ENCODE measurements at regions of chr22 and their contacts with region 1.

Region 1: DNA sequence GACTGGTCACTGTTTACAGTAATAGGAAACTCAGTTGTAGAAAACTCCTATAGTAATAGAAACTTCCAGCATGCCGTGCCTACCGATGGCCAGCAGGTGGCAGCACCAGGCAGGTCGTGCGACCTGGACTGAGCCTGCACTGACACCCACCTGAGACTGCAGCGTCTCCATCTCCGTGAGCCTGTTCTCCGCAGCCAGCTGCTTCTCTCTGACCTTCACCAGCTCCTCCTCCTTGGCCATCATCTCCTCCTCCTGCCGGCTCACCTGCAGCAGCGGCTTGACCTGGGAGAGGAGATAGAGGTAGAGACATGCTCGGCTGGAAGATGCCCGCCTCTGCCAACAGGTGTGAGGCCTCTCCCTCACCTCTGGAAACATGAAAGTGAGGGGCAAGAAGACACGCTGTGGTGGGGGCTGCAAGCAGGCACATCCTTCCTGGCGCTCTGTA is 48.5 kb downstream of the APOL1 start:
- DNase-seq: peak; percentile 82
- H3K4me3 Mint-ChIP-seq: no peak overlapping the region
- H3K27ac Mint-ChIP-seq: no peak overlapping the region
- H3K4me1 Mint-ChIP-seq: peaks cover 8% of the 10 kb centered on the region
- H3K27me3 Mint-ChIP-seq: no peaks in the 10 kb centered on the region
- CTCF ChIP-seq: peak; percentile 90

Region 2: GRCh38 chr22:36180038-36180880 is 121.1 kb before region 1 on chr22:
- CTCF ChIA-PET with region 1: no interaction called
- intact Hi-C with region 1: no loop called
- DNase-seq: peak; percentile 87
- H3K4me3 Mint-ChIP-seq: no peak overlapping the region
- H3K27ac Mint-ChIP-seq: no peak overlapping the region
- H3K4me1 Mint-ChIP-seq: no peaks in the 10 kb centered on the region
- H3K27me3 Mint-ChIP-seq: peaks cover 42% of the 10 kb centered on the region
- CTCF ChIP-seq: peak; percentile 92

Region 3: GRCh38 chr22:36352803-36353507 is 51.5 kb after region 1 on chr22:
- CTCF ChIA-PET with region 1: no interaction called
- intact Hi-C with region 1: loop called (anchors 2 kb)
- DNase-seq: peak; percentile 80
- H3K4me3 Mint-ChIP-seq: peak overlapping the region; percentile 54
- H3K27ac Mint-ChIP-seq: peak overlapping the region; percentile 61
- H3K4me1 Mint-ChIP-seq: peaks cover 64% of the 10 kb centered on the region
- H3K27me3 Mint-ChIP-seq: no peaks in the 10 kb centered on the region
- CTCF ChIP-seq: no peak

Region 4: DNA sequence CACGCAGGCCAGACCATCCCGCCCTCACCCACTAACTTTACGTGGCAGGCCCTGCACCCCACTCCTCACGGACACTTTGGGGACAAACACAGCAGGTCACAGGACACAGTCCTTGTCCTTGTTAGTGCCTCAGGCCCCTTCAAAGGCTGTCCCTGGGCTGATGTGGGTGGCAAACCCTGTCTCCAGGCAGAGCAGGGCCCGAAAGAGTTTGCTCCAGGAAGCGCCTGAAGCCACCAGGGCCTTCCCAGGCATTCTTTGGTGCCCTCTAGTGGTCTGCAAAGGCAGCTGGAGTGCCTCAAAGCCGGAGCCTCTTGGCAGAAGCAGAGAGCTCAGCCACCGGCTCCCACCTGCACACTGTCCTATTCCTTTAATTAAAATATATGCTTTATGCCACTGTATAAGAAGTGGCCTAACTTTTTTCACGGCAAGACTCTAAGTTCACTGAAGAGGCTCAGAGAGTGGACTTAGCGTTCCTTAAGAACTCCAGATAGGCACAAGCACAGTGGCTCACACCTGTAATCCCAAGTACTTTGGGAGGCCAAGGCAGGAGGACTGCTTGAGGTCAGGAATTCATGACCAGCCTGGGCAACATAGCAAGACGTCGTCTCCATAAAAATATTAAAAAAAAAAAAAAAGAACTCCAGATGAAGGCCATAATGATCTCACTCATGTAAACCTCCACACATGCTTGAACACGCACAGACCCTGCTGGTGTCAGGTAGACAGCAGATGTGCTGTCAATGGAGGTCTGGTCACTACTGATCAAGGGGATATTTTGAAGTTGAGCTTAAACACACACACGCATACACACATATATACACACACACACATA is 169.0 kb after region 1 on chr22:
- CTCF ChIA-PET with region 1: interaction called, 31 read pairs
- intact Hi-C with region 1: loop called (anchors 1 kb)
- DNase-seq: peak; percentile 85
- H3K4me3 Mint-ChIP-seq: no peak overlapping the region
- H3K27ac Mint-ChIP-seq: no peak overlapping the region
- H3K4me1 Mint-ChIP-seq: peaks cover 31% of the 10 kb centered on the region
- H3K27me3 Mint-ChIP-seq: no peaks in the 10 kb centered on the region
- CTCF ChIP-seq: peak; percentile 91

Measured in Calu3 (cell line).